Activated CD4-positive, alpha-beta T cell treated with anti-CD3 and anti-CD28 coated beads, Interleukin-2, amount 10 ng/mL, durations not matched to agents 7 days and 5 days (primary cell): ENCODE measurements at regions of chr17 and their contacts with region 1.

Region 1: DNA sequence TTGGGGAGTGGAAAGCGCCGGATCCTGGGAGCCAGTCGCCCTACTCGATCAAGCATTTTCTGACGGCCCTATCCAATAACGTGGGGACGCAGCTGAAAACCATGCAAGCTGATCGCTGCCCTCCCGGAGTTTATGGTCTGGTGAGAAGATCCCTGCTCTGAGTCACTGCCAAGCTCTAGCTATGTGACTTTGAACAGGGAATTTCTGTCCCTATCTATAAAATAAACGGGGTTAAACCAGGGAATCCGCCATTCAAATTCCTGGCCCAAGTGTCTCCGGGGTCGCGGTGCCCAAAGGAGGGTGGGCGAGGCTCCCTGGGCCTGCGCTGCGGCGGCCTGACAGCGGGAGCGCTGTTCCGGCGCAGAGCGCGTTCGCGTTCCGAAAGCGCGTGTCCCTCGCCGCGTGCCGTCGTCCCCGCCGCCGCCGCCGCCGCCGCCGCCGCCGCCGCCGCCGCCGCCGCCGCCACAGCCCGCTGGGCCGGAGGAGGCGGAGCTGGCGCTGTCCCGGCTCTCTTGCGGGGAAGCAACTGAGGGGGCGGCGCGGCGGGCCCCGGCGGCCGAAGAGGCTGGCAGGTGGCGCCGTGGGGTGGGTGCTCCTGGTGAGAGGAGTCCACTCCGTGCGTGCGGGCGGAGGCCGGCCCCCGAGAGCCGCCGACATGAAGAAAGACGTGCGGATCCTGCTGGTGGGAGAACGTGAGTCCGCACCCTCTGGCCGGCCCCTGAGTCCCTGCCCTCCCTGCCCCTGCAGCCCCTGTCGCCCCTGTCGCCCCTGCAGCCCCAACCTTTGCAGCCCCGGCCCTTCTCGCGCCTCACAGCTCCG is at the start of gene RHOT1:
- DNase-seq: peak; percentile 69
- H3K4me3 Mint-ChIP-seq: peak within 1 kb of the TSS; percentile 99
- H3K27ac Mint-ChIP-seq: peak within 1 kb of the TSS; percentile 86
- H3K4me1 Mint-ChIP-seq: peaks cover 33% of the 10 kb centered on the region
- H3K27me3 Mint-ChIP-seq: no peaks in the 10 kb centered on the region
- total RNA-seq, gene RHOT1: 26.4 to 33.6 TPM

Region 2: GRCh38 chr17:31919802-31920525 is 222.3 kb before region 1 on chr17:
- CTCF ChIA-PET with region 1: no interaction called
- POLR2A ChIA-PET with region 1: no interaction called
- DNase-seq: no peak
- H3K4me3 Mint-ChIP-seq: no peak overlapping the region
- H3K27ac Mint-ChIP-seq: peak overlapping the region; percentile 15
- H3K4me1 Mint-ChIP-seq: peaks cover 8% of the 10 kb centered on the region
- H3K27me3 Mint-ChIP-seq: peaks cover 14% of the 10 kb centered on the region

Region 3: GRCh38 chr17:32006957-32007462 is 135.2 kb before region 1 on chr17 and contains the start of gene LRRC37B:
- CTCF ChIA-PET with region 1: interaction called, 29 read pairs
- POLR2A ChIA-PET with region 1: interaction called, 4 read pairs
- DNase-seq: peak; percentile 88
- H3K4me3 Mint-ChIP-seq: peak within 1 kb of the TSS; percentile 84
- H3K27ac Mint-ChIP-seq: peak within 1 kb of the TSS; percentile 91
- H3K4me1 Mint-ChIP-seq: peaks cover 37% of the 10 kb centered on the region
- H3K27me3 Mint-ChIP-seq: no peaks in the 10 kb centered on the region
- total RNA-seq, gene LRRC37B: 33.0 to 36.3 TPM

Region 4: GRCh38 chr17:32127158-32127897 is 14.9 kb before region 1 on chr17:
- CTCF ChIA-PET with region 1: interaction called, 12 read pairs
- POLR2A ChIA-PET with region 1: interaction called, 3 read pairs
- DNase-seq: peak; percentile 94
- H3K4me3 Mint-ChIP-seq: peak overlapping the region; percentile 86
- H3K27ac Mint-ChIP-seq: peak overlapping the region; percentile 96
- H3K4me1 Mint-ChIP-seq: peaks cover 39% of the 10 kb centered on the region
- H3K27me3 Mint-ChIP-seq: peaks cover 2% of the 10 kb centered on the region